Activated CD4-positive, alpha-beta T cell treated with anti-CD3 and anti-CD28 coated beads, Interleukin-2, amount 10 ng/mL, durations not matched to agents 24 days and 14 days (primary cell): ENCODE measurements at regions of chr12 and their contacts with region 1.

Region 1: GRCh38 chr12:101759396-101760047 is 20.3 kb upstream of the SYCP3 start:
- DNase-seq: no peak
- H3K4me3 Mint-ChIP-seq: no peak overlapping the region
- H3K27ac Mint-ChIP-seq: no peak overlapping the region
- H3K4me1 Mint-ChIP-seq: peaks cover 2% of the 10 kb centered on the region
- H3K27me3 Mint-ChIP-seq: no peaks in the 10 kb centered on the region

Region 2: GRCh38 chr12:101414533-101415119 is 344.9 kb before region 1 on chr12:
- intact Hi-C with region 1: loop called (anchors 2 kb)
- DNase-seq: peak; percentile 74
- H3K4me3 Mint-ChIP-seq: no peak overlapping the region
- H3K27ac Mint-ChIP-seq: no peak overlapping the region
- H3K4me1 Mint-ChIP-seq: no peaks in the 10 kb centered on the region
- H3K27me3 Mint-ChIP-seq: peaks cover 22% of the 10 kb centered on the region

Region 3: DNA sequence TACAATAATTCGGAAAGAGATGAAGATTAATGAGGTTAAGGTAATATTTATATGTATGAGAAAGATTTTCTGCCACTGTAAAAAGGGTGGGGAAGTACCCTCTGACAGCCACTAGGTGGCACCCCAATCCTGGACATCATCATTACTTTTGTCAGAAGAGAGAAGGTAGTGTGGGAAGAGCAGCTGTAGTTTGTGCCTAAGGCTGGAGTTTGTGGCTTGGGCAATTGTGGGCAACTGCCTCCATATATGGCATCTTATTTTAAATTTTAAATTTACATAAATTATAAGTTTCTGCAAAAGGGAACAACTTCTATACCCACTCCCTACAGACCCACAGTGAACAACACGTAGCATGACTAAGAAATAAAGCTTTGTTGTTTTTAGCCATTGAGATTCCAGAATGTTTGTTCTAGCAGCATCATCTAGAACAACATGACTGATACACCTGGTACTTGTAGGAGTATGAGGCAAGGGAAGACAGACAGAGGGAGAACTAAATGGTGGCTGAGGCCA is 14.2 kb after region 1 on chr12:
- intact Hi-C with region 1: no loop called
- DNase-seq: peak; percentile 89
- H3K4me3 Mint-ChIP-seq: no peak overlapping the region
- H3K27ac Mint-ChIP-seq: no peak overlapping the region
- H3K4me1 Mint-ChIP-seq: peaks cover 24% of the 10 kb centered on the region
- H3K27me3 Mint-ChIP-seq: no peaks in the 10 kb centered on the region

Region 4: GRCh38 chr12:102833687-102834445 is 1074.3 kb after region 1 on chr12:
- intact Hi-C with region 1: no loop called
- DNase-seq: no peak
- H3K4me3 Mint-ChIP-seq: no peak overlapping the region
- H3K27ac Mint-ChIP-seq: no peak overlapping the region
- H3K4me1 Mint-ChIP-seq: no peaks in the 10 kb centered on the region
- H3K27me3 Mint-ChIP-seq: no peaks in the 10 kb centered on the region